AG04450 (cell line): ENCODE measurements at regions of chr12 and their contacts with region 1.

Region 1: GRCh38 chr12:26651566-26652188 is 181.3 kb downstream of the ITPR2 start:
- DNase-seq: peak; percentile 60
- H3K4me3 ChIP-seq: no peak overlapping the region
- H3K27ac ChIP-seq: no peak overlapping the region
- H3K27me3 ChIP-seq: no peaks in the 10 kb centered on the region
- CTCF ChIP-seq: peak; percentile 85

Region 2: DNA sequence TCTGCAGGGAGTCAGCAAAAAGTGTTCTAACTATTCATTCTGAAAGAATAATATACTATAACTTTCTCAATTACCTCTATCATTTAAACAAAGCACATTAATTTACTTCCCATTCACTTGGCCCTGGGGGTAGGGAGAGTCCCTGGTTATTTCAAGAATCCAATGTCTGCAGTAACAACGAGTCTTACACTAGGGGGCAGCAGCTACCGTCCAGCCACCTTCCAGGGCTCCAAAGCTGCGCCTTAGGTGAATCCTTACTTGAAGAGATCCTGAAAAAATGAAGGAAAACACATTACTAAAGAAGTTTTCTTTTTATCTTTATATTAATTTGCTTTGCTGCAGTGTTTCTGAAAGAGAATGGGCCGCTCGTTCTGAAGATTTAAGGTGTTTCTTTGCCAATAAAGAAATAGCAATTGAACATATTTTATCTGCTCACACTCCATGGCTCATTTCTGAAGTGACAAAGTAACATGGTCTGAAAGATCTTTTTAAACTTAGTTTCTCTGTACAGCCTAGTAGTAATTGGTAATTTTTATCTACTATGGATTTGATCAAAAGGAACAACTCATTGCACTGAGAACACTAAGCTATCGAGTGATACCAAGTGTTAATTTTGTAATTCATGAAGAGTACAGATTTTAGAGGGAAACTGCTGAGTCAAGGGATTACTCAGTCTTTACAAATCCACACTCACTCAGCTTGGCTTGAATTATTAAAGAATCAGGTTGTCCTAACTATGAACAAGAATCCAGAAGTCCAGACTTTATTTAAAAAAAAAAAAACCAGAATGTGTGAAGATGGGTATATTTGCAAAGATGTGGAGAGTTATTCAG is 554.4 kb before region 1 on chr12:
- CTCF ChIA-PET with region 1: interaction called, 24 read pairs
- POLR2A ChIA-PET with region 1: no interaction called
- DNase-seq: peak; percentile 58
- H3K4me3 ChIP-seq: no peak overlapping the region
- H3K27ac ChIP-seq: no peak overlapping the region
- H3K27me3 ChIP-seq: no peaks in the 10 kb centered on the region
- CTCF ChIP-seq: peak; percentile 97

Region 3: DNA sequence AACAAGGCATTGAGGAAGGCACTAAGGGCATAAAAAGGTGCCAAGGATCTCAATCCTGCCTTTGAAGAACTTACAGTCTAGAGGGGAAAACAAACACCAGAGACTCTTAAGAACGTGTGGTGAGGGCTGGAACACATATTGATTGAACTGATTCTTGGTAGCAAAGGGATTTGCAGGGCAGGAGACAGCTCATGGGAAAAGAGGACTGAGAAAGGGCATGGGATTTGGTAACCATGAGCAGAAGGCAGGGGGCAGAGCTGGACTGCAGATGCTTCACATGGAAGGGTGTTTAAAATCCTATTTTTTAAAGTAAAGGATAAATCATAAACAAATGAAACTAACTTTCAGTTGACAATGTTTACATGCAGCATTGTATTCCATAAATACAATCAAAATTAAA is 21.8 kb before region 1 on chr12:
- CTCF ChIA-PET with region 1: interaction called, 28 read pairs
- POLR2A ChIA-PET with region 1: interaction called, 6 read pairs
- DNase-seq: no peak
- H3K4me3 ChIP-seq: peak overlapping the region; percentile 7; the same call in 1 of the 2 replicates
- H3K27ac ChIP-seq: no peak overlapping the region
- H3K27me3 ChIP-seq: no peaks in the 10 kb centered on the region
- CTCF ChIP-seq: peak; percentile 69

Region 4: GRCh38 chr12:26773313-26774104 is 121.8 kb after region 1 on chr12:
- CTCF ChIA-PET with region 1: no interaction called
- POLR2A ChIA-PET with region 1: no interaction called
- DNase-seq: no peak
- H3K4me3 ChIP-seq: no peak overlapping the region
- H3K27ac ChIP-seq: no peak overlapping the region
- H3K27me3 ChIP-seq: no peaks in the 10 kb centered on the region
- CTCF ChIP-seq: no peak